Left ventricle myocardium inferior (tissue), 1 donor: ENCODE measurements at regions of chr10 and their contacts with region 1.

Region 1: GRCh38 chr10:22988581-22989360 is 60.9 kb downstream of the ARMC3 start:
- DNase-seq: peak; percentile 27
- H3K4me3 ChIP-seq: peak overlapping the region; percentile 27
- H3K27ac ChIP-seq: no peak overlapping the region
- H3K4me1 ChIP-seq: peaks cover 7% of the 10 kb centered on the region
- H3K27me3 ChIP-seq: peaks cover 4% of the 10 kb centered on the region
- CTCF ChIP-seq: peak; percentile 93

Region 2: DNA sequence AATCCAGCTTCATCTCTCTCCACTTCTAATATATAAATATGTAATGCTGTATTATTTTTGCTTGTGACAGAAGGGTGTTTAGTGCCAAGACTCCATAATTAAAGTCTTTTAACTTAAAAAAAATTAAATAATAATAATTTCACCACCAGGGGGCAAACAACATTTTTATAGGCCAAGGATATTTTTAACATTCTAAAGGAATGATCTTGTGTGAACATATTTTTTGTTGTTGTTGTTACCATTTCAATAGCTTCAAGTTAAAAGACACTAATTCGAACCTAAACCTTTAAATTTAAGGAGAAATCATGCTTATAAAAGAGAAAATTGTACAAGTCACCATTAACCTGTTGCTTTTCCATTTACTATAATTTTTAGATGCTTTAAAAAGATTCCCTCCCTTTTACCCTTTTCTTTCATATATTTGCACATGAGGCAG is 977.8 kb before region 1 on chr10:
- intact Hi-C with region 1: loop called (anchors 5 kb)
- DNase-seq: no peak
- H3K4me3 ChIP-seq: no peak overlapping the region
- H3K27ac ChIP-seq: no peak overlapping the region
- H3K4me1 ChIP-seq: peaks cover 6% of the 10 kb centered on the region
- H3K27me3 ChIP-seq: no peaks in the 10 kb centered on the region
- CTCF ChIP-seq: peak; percentile 58

Region 3: GRCh38 chr10:22573820-22574569 is 414.8 kb before region 1 on chr10:
- intact Hi-C with region 1: loop called (anchors 10 kb)
- DNase-seq: no peak
- H3K4me3 ChIP-seq: no peak overlapping the region
- H3K27ac ChIP-seq: no peak overlapping the region
- H3K4me1 ChIP-seq: peaks cover 14% of the 10 kb centered on the region
- H3K27me3 ChIP-seq: no peaks in the 10 kb centered on the region
- CTCF ChIP-seq: peak; percentile 47

Region 4: DNA sequence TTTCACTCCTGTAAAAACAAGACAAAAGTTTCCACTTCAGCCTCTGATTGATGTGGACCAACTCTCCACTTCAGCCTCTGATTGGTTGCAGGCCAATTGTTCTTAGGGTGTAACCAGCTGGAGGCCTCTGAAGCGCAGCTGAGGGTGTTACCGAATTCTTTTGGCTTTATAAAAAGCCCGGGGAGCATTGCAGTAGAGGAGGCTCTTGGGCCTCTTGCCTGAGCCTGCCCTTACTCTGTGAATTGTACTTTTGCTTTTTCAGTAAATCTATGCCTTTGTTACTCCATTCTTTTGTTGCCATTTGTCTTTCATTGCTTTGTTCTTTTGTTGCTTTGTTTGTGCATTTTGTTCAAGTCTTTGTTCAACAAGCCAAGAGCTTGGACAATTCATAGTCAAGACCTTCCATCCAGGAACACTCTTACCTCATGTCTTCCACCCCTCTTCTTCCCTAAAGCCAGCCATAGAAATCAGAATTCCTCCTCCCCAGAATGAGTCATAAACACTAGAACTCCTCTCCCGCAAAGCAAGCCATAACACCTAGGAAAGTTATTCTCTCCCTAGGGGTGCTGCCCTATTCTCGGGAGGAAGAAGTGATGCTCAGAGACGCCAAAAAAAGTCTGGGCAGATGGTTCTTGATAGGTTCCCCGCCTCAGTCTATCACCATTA is 114.4 kb before region 1 on chr10:
- intact Hi-C with region 1: no loop called
- DNase-seq: no peak
- H3K4me3 ChIP-seq: no peak overlapping the region
- H3K27ac ChIP-seq: no peak overlapping the region
- H3K4me1 ChIP-seq: no peaks in the 10 kb centered on the region
- H3K27me3 ChIP-seq: no peaks in the 10 kb centered on the region
- CTCF ChIP-seq: no peak